ENCODE measurements at regions of chr6 and their contacts with region 1.

Region 1: DNA sequence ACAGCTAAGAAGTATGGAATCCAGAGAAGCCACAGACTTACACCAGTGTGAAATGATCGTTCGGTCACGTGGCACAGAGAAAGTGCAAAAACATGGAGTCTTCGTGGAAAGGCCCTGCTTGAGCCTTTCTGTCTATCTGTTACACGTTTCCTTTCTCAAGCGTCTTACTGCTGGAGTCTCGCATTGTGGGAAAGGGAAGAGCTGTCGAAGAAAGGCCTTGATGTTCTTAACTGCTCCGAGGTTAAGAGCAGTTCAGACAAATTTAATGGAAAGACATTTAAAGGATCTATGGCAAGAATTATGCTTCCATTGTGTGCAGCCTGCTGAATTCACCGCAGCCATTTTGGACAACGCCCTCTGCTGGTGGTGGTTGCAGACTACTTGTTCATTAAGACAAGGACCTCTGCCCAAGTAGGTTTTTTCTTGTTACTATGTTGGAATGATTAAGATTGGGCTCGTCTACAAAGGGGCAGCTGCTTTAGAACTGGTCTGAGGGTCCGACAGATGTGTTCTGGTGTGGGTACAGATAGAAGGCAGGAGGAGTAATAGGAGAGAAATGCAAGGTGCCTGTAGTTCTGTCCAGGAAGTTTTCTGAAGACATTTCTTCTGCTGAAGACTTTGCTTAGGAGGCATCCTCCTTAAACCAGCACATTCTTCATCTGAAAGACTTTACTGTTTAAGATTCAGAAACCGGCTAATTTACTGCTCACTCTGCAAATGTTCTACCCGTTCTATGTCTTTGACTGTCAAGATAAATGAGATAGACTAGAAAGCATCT is 24.7 kb upstream of the CCN6 start:
- DNase-seq: peak; percentile 73 to 85 (median 81)
- H3K4me3 ChIP-seq: no peak overlapping the region
- H3K27ac ChIP-seq: no peak overlapping the region
- H3K4me1 ChIP-seq: peaks cover 7 to 18% (median 8%) of the 10 kb centered on the region in 4 experiments
- H3K27me3 ChIP-seq: no peaks in the 10 kb centered on the region

Region 2: GRCh38 chr6:112018619-112019416 is 10.4 kb before region 1 on chr6:
- CTCF ChIA-PET with region 1: interaction called, 34 read pairs
- POLR2A ChIA-PET with region 1: no interaction called
- DNase-seq: no peak
- H3K4me3 ChIP-seq: no peak overlapping the region
- H3K27ac ChIP-seq: no peak overlapping the region
- H3K4me1 ChIP-seq: no peaks in the 10 kb centered on the region
- H3K27me3 ChIP-seq: no peaks in the 10 kb centered on the region